Mammary epithelial cell (primary cell): ENCODE measurements at regions of chr7 and their contacts with region 1.

Region 1: DNA sequence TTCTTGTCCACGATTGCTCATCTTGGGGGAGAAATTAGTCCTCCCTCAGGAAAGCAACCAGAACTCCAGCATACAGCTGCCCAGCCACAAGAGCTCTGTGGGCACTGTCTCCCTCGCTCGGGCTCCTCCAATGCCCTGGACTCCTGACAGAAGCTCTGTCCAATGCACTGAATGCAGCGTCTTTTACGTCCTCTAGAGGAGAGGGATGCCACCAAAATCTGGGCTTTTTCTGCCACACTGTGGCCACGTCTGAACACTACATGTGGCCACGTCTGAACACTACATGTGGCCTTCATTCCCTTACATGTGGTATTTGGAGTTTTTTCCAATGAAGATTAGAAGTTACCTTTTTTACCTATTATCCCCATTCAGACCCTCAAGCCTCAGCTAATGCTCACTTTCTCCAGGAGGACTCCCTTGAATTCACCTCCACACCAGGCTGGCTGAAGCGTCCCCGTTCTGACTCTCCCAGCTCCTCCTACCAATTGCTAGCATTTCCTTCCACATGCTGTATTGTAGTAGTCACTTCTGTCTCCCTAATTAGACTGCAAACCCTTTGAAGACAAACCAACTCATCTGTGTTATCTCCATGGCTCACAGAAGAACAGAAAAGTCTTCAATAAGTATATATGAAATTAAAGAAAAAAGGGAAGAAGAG is 134.3 kb upstream of the PDE1C start:
- DNase-seq: peak; percentile 85
- H3K4me3 ChIP-seq: peak overlapping the region; percentile 30 to 40 (median 30)
- H3K27ac ChIP-seq: no peak overlapping the region
- H3K4me1 ChIP-seq: peaks cover 3% of the 10 kb centered on the region
- H3K27me3 ChIP-seq: no peaks in the 10 kb centered on the region
- CTCF ChIP-seq: peak; percentile 85 to 88

Region 2: GRCh38 chr7:31192986-31193385 is 1011.5 kb before region 1 on chr7:
- CTCF ChIA-PET with region 1: no interaction called
- dilution Hi-C with region 1: no loop called
- in situ Hi-C with region 1: no loop called
- intact Hi-C with region 1: loop called (anchors 5 kb)
- DNase-seq: peak; percentile 52
- H3K4me3 ChIP-seq: no peak overlapping the region
- H3K27ac ChIP-seq: no peak overlapping the region
- H3K4me1 ChIP-seq: no peaks in the 10 kb centered on the region
- H3K27me3 ChIP-seq: no peaks in the 10 kb centered on the region
- CTCF ChIP-seq: peak; percentile 83 to 93

Region 3: GRCh38 chr7:31443457-31443856 is 761.0 kb before region 1 on chr7:
- CTCF ChIA-PET with region 1: no interaction called
- dilution Hi-C with region 1: no loop called
- in situ Hi-C with region 1: no loop called
- intact Hi-C with region 1: loop called (anchors 1 kb)
- DNase-seq: peak; percentile 46
- H3K4me3 ChIP-seq: no peak overlapping the region
- H3K27ac ChIP-seq: no peak overlapping the region
- H3K4me1 ChIP-seq: no peaks in the 10 kb centered on the region
- H3K27me3 ChIP-seq: no peaks in the 10 kb centered on the region
- CTCF ChIP-seq: peak; percentile 76 to 81

Region 4: DNA sequence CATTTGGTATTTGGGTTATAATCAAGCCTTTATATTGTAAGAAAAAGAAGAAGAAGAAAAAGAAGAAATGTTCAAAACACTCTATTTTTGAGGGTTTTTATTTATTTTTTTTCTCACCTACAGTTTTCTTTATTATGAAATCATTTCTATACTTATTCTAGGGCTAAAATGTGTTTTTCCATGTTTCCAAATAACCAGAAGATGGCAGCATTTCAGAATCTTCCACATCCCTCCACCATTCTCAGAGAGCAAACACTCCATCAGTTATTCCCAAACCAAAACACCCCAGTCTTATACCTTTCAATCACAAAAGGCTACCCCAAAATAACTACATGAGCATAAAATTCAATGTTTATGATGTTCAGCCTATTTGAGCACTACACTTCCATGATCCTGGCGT is 556.2 kb before region 1 on chr7:
- CTCF ChIA-PET with region 1: no interaction called
- dilution Hi-C with region 1: no loop called
- in situ Hi-C with region 1: no loop called
- intact Hi-C with region 1: loop called (anchors 1 kb)
- DNase-seq: no peak
- H3K4me3 ChIP-seq: no peak overlapping the region
- H3K27ac ChIP-seq: no peak overlapping the region
- H3K4me1 ChIP-seq: peaks cover 10% of the 10 kb centered on the region
- H3K27me3 ChIP-seq: no peaks in the 10 kb centered on the region
- CTCF ChIP-seq: peak; percentile 8 to 44

Region 5: DNA sequence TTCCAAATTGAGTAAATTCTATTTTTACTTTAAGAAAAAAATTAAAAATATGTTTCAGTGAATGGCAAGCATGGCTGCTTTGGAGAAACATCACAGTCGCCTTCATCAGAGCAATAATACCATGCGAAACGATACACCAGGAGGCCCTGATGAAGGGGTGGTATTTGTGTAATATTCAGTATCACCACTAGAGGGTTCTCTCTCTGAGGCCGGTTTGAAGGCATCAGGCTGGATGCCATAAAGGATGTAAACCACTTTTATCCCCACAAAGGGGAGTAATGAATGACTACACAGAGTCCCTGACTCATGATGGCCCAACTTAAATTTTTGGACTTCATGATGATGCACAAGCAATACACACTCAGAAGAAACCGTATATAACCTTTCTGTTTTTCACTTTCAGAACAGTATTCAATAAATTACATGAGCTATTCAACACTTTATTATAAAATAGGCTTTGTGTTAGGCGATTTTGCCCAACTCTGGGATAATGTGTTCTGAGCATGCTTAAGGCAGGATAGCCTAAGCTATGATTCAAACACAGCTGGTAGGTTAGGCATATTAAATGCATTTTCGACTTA is 422.0 kb before region 1 on chr7:
- CTCF ChIA-PET with region 1: no interaction called
- dilution Hi-C with region 1: no loop called
- in situ Hi-C with region 1: no loop called
- intact Hi-C with region 1: loop called (anchors 1 kb)
- DNase-seq: peak; percentile 69
- H3K4me3 ChIP-seq: no peak overlapping the region
- H3K27ac ChIP-seq: no peak overlapping the region
- H3K4me1 ChIP-seq: no peaks in the 10 kb centered on the region
- H3K27me3 ChIP-seq: no peaks in the 10 kb centered on the region
- CTCF ChIP-seq: peak; percentile 82 to 83

Region 6: DNA sequence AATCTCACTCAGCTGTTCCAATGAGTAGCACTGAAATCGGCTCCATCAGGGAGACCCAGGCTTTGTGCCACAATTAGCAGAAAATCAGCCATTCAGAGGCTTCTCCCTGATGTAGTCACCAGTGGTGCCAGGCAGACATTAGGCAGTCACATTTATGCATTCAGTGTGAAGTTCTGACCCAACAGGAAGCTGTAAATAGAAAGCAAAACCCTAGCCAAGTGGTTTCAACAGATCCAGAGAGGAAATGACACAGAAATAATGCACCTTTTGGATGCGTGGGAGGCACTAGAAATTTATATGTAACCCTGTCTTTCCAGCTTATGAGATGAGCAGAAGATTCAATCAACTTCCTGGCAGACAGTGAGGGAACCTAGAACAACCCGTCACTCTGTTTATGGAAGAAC is 320.7 kb before region 1 on chr7:
- CTCF ChIA-PET with region 1: interaction called, 3 read pairs
- dilution Hi-C with region 1: no loop called
- in situ Hi-C with region 1: no loop called
- intact Hi-C with region 1: loop called (anchors 1 kb)
- DNase-seq: peak; percentile 91
- H3K4me3 ChIP-seq: peak overlapping the region in 1 of 3 experiments; percentile 4
- H3K27ac ChIP-seq: peak overlapping the region; percentile 81
- H3K4me1 ChIP-seq: peaks cover 27% of the 10 kb centered on the region
- H3K27me3 ChIP-seq: no peaks in the 10 kb centered on the region
- CTCF ChIP-seq: no peak

Region 7: DNA sequence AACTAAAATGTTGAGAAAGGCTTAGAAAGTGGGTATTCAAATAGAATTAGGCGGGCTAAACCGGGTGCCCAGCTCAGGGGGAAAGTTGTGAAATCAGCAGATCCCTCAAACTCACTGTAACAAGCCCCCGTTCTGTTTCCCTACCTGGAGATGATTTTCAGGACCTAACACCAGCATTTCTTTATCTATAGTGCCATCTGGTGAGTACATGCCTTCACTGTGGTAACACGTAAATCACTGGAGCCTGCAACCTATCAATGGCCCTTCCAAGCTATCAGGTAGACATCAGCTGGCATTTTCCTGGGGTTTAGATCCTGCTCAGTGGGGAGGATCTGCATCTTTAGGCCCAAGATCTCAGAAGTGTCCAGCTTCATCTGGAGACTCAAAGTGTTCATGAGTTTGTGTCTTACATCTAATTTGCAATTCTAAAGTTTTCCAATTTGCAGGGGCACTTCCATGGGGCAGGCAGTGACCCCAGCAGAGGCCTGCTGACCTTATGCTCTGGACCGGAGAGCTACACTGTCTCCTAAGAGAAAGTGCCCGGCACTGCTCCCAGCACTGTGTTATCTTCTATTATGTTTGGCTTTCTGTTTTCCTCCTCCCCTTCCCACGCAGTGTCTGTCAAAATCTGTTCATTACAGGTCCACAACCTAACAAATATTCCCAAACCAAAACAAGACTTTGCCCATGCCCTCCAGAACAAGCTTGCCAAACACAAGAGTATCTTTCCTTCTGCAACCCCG is 153.2 kb after region 1 on chr7:
- CTCF ChIA-PET with region 1: no interaction called
- dilution Hi-C with region 1: loop called (anchors 5 kb)
- in situ Hi-C with region 1: no loop called
- intact Hi-C with region 1: no loop called
- DNase-seq: peak; percentile 22
- H3K4me3 ChIP-seq: no peak overlapping the region
- H3K27ac ChIP-seq: no peak overlapping the region
- H3K4me1 ChIP-seq: no peaks in the 10 kb centered on the region
- H3K27me3 ChIP-seq: peaks cover 3% of the 10 kb centered on the region
- CTCF ChIP-seq: peak; percentile 51 to 66